CD4-positive, alpha-beta memory T cell (primary cell): ENCODE measurements at regions of chr6 and their contacts with region 1.

Region 1: GRCh38 chr6:42984001-42984923 is at the start of gene PPP2R5D:
- DNase-seq: peak; percentile 96 to 99 (median 98)
- H3K4me3 ChIP-seq: peak within 1 kb of the TSS; percentile 70 to 75
- H3K4me3 Mint-ChIP-seq: peak within 1 kb of the TSS; percentile 88 to 97 (median 94)
- H3K27ac ChIP-seq: peak within 1 kb of the TSS; percentile 87
- H3K27ac Mint-ChIP-seq: peak within 1 kb of the TSS; percentile 93 to 98 (median 96)
- H3K4me1 ChIP-seq: peaks cover 58% of the 10 kb centered on the region
- H3K4me1 Mint-ChIP-seq: peaks cover 45 to 73% (median 62%) of the 10 kb centered on the region in 4 donors
- H3K27me3 ChIP-seq: no peaks in the 10 kb centered on the region
- H3K27me3 Mint-ChIP-seq: no peaks in the 10 kb centered on the region
- total RNA-seq, gene PPP2R5D: 36.6 to 38.0 TPM

Region 2: GRCh38 chr6:42963855-42964605 is 20.2 kb before region 1 on chr6:
- CTCF ChIA-PET with region 1: interaction called, 4 read pairs
- POLR2A ChIA-PET with region 1: interaction called, 10 read pairs
- intact Hi-C with region 1: loop called (anchors 1 kb)
- DNase-seq: peak in 3 of 5 donors; percentile 28 to 42 (median 37)
- H3K4me3 ChIP-seq: no peak overlapping the region
- H3K4me3 Mint-ChIP-seq: no peak overlapping the region
- H3K27ac ChIP-seq: no peak overlapping the region
- H3K27ac Mint-ChIP-seq: no peak overlapping the region
- H3K4me1 ChIP-seq: peaks cover 11% of the 10 kb centered on the region
- H3K4me1 Mint-ChIP-seq: peaks cover 7 to 27% (median 11%) of the 10 kb centered on the region in 4 donors
- H3K27me3 ChIP-seq: no peaks in the 10 kb centered on the region
- H3K27me3 Mint-ChIP-seq: no peaks in the 10 kb centered on the region

Region 3: GRCh38 chr6:43013843-43014433 is 29.7 kb after region 1 on chr6 and contains the starts of genes KLHDC3 and MEA1:
- CTCF ChIA-PET with region 1: interaction called, 4 read pairs
- POLR2A ChIA-PET with region 1: interaction called, 73 read pairs
- intact Hi-C with region 1: loop called (anchors 1 kb)
- DNase-seq: peak; percentile 98 to 100 (median 100)
- H3K4me3 ChIP-seq: peak within 1 kb of the TSS; percentile 75 to 84
- H3K4me3 Mint-ChIP-seq: peak within 1 kb of the TSS; percentile 91 to 97 (median 94)
- H3K27ac ChIP-seq: peak within 1 kb of the TSS; percentile 71
- H3K27ac Mint-ChIP-seq: peak within 1 kb of the TSS; percentile 75 to 98 (median 94)
- H3K4me1 ChIP-seq: peaks cover 54% of the 10 kb centered on the region
- H3K4me1 Mint-ChIP-seq: peaks cover 39 to 71% (median 56%) of the 10 kb centered on the region in 4 donors
- H3K27me3 ChIP-seq: no peaks in the 10 kb centered on the region
- H3K27me3 Mint-ChIP-seq: no peaks in the 10 kb centered on the region
- total RNA-seq, gene KLHDC3: 66.6 to 67.9 TPM
- total RNA-seq, gene MEA1: 36.2 to 36.3 TPM

Region 4: GRCh38 chr6:43021270-43022047 is 37.2 kb after region 1 on chr6 and contains the start of gene RRP36:
- CTCF ChIA-PET with region 1: no interaction called
- POLR2A ChIA-PET with region 1: interaction called, 73 read pairs
- intact Hi-C with region 1: no loop called
- DNase-seq: peak; percentile 47 to 72 (median 50)
- H3K4me3 ChIP-seq: peak within 1 kb of the TSS; percentile 84
- H3K4me3 Mint-ChIP-seq: peak within 1 kb of the TSS; percentile 94 to 100 (median 98)
- H3K27ac ChIP-seq: peak within 1 kb of the TSS; percentile 68
- H3K27ac Mint-ChIP-seq: peak within 1 kb of the TSS; percentile 79 to 98 (median 95)
- H3K4me1 ChIP-seq: peaks cover 41% of the 10 kb centered on the region
- H3K4me1 Mint-ChIP-seq: peaks cover 14 to 58% (median 31%) of the 10 kb centered on the region in 4 donors
- H3K27me3 ChIP-seq: no peaks in the 10 kb centered on the region
- H3K27me3 Mint-ChIP-seq: no peaks in the 10 kb centered on the region
- total RNA-seq, gene RRP36: 56.5 to 58.7 TPM

Region 5: GRCh38 chr6:43053545-43054205 is 69.4 kb after region 1 on chr6 and contains the start of gene CUL7:
- CTCF ChIA-PET with region 1: interaction called, 3 read pairs
- POLR2A ChIA-PET with region 1: interaction called, 37 read pairs
- intact Hi-C with region 1: loop called (anchors 1 kb)
- DNase-seq: peak; percentile 86 to 92 (median 88)
- H3K4me3 ChIP-seq: peak within 1 kb of the TSS; percentile 81 to 88
- H3K4me3 Mint-ChIP-seq: peak within 1 kb of the TSS; percentile 92 to 97 (median 94)
- H3K27ac ChIP-seq: peak within 1 kb of the TSS; percentile 85
- H3K27ac Mint-ChIP-seq: peak within 1 kb of the TSS; percentile 94 to 98 (median 97)
- H3K4me1 ChIP-seq: peaks cover 41% of the 10 kb centered on the region
- H3K4me1 Mint-ChIP-seq: peaks cover 22 to 51% (median 44%) of the 10 kb centered on the region in 4 donors
- H3K27me3 ChIP-seq: no peaks in the 10 kb centered on the region
- H3K27me3 Mint-ChIP-seq: no peaks in the 10 kb centered on the region
- total RNA-seq, gene CUL7: 13.7 to 13.9 TPM

Region 6: GRCh38 chr6:43059168-43060033 is 75.1 kb after region 1 on chr6 and contains the starts of genes KLC4 and MRPL2:
- CTCF ChIA-PET with region 1: interaction called, 3 read pairs
- POLR2A ChIA-PET with region 1: interaction called, 37 read pairs
- intact Hi-C with region 1: loop called (anchors 1 kb)
- DNase-seq: peak; percentile 95 to 99 (median 96)
- H3K4me3 ChIP-seq: peak within 1 kb of the TSS; percentile 84 to 87
- H3K4me3 Mint-ChIP-seq: peak within 1 kb of the TSS; percentile 94 to 99 (median 97)
- H3K27ac ChIP-seq: peak within 1 kb of the TSS; percentile 91
- H3K27ac Mint-ChIP-seq: peak within 1 kb of the TSS; percentile 97 to 100 (median 99)
- H3K4me1 ChIP-seq: peaks cover 24% of the 10 kb centered on the region
- H3K4me1 Mint-ChIP-seq: peaks cover 27 to 52% (median 35%) of the 10 kb centered on the region in 4 donors
- H3K27me3 ChIP-seq: no peaks in the 10 kb centered on the region
- H3K27me3 Mint-ChIP-seq: no peaks in the 10 kb centered on the region
- total RNA-seq, gene KLC4: 51.6 to 57.0 TPM
- total RNA-seq, gene MRPL2: 55.3 to 56.5 TPM

Region 7: DNA sequence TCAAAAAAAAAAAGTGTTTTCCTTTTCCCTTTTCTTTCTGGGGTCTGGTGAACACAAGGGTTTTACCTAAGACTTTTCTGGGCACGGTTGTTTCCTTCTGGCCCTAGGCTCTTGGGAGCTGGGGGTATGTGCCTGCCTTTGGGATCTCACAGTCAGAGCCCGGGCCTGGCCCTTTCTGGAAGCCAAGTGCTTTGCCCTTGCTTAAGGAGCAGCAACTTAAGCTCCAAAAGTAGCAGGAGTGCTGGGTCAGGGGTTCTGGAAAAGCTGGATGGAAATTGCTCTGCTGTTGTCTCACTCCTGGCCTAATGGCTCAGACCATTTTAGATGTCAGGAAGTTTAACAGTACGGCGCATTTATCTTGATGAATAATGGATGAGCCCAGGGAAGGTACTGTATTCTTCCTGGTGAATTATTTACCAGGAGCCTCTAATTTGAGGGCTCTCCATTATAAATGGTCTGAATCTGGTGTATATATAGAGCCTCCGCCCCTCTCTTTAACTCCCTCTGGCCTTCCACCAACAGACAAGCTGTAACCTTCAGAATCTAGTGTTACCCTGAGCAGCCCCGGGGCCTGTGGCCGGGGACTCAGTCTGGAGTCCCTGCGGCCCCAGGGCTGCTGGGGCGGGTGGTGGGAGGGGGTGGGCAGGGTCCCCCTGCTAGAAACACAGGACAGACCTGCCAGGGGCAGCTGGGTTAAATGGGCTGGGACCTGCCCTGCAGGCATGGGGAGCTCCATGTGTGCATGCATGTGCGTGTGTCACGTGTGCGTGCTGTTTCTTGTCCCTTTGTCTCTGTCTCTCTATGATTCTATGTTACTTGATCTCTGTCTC is 129.4 kb after region 1 on chr6:
- CTCF ChIA-PET with region 1: no interaction called
- POLR2A ChIA-PET with region 1: no interaction called
- intact Hi-C with region 1: no loop called
- DNase-seq: no peak
- H3K4me3 ChIP-seq: no peak overlapping the region
- H3K4me3 Mint-ChIP-seq: no peak overlapping the region
- H3K27ac ChIP-seq: no peak overlapping the region
- H3K27ac Mint-ChIP-seq: no peak overlapping the region
- H3K4me1 ChIP-seq: no peaks in the 10 kb centered on the region
- H3K4me1 Mint-ChIP-seq: peaks cover 0 to 3% (median 0%) of the 10 kb centered on the region in 4 donors
- H3K27me3 ChIP-seq: no peaks in the 10 kb centered on the region
- H3K27me3 Mint-ChIP-seq: no peaks in the 10 kb centered on the region